ENCODE measurements at regions of chr4 and their contacts with region 1.

Region 1: DNA sequence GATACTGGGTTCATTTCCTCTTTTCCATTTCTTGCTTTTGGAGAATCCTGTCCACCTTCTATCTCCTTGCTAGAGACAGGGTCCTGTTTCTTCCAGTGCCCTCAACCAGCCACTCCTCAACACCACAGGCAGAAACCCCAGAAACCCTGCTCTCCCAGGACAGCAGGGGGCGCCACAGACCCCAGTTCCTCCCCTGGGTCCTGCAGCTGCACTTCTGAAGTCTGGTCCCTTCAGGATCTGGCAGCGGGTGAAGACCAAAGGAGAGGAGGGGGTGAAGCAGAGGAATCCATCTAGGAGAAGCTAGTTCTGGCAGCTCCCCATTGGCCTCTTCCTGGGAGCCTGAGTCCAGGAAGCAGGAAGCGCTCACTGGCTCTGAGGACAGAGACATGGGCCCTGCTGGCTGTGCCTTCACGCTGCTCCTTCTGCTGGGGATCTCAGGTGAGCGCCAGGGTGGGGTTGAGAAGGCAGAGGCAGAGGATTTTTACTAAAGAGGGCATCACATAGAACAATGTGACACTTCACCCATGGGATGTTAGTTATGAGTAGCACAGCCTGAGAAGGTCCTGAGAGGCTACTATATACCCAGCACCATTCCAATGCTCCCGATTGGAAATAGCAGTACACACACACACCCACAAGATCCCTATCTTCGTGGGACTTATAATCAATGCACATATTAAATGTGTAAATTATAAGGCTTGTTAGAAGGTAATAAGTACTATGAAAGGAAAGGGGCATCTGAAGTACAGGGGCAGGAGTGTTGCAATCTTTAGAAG is at the start of gene PRSS48:
- DNase-seq: peak; percentile 70
- H3K4me3 Mint-ChIP-seq: no peak within 1 kb of the TSS
- H3K27ac Mint-ChIP-seq: peak within 1 kb of the TSS; percentile 57
- H3K4me1 Mint-ChIP-seq: no peaks in the 10 kb centered on the region
- H3K27me3 Mint-ChIP-seq: no peaks in the 10 kb centered on the region
- CTCF ChIP-seq: peak; percentile 80
- total RNA-seq, gene PRSS48: not detected in 2 replicates

Region 2: GRCh38 chr4:150722908-150723362 is 554.0 kb before region 1 on chr4:
- CTCF ChIA-PET with region 1: no interaction called
- POLR2A ChIA-PET with region 1: no interaction called
- intact Hi-C with region 1: no loop called
- DNase-seq: peak; percentile 93
- H3K4me3 Mint-ChIP-seq: peak overlapping the region; percentile 43
- H3K27ac Mint-ChIP-seq: peak overlapping the region; percentile 94
- H3K4me1 Mint-ChIP-seq: peaks cover 31% of the 10 kb centered on the region
- H3K27me3 Mint-ChIP-seq: no peaks in the 10 kb centered on the region
- CTCF ChIP-seq: peak; percentile 24

Region 3: GRCh38 chr4:151031831-151032605 is 245.0 kb before region 1 on chr4:
- CTCF ChIA-PET with region 1: no interaction called
- POLR2A ChIA-PET with region 1: no interaction called
- intact Hi-C with region 1: no loop called
- DNase-seq: peak; percentile 28
- H3K4me3 Mint-ChIP-seq: no peak overlapping the region
- H3K27ac Mint-ChIP-seq: no peak overlapping the region
- H3K4me1 Mint-ChIP-seq: peaks cover 6% of the 10 kb centered on the region
- H3K27me3 Mint-ChIP-seq: no peaks in the 10 kb centered on the region
- CTCF ChIP-seq: no peak

Region 4: DNA sequence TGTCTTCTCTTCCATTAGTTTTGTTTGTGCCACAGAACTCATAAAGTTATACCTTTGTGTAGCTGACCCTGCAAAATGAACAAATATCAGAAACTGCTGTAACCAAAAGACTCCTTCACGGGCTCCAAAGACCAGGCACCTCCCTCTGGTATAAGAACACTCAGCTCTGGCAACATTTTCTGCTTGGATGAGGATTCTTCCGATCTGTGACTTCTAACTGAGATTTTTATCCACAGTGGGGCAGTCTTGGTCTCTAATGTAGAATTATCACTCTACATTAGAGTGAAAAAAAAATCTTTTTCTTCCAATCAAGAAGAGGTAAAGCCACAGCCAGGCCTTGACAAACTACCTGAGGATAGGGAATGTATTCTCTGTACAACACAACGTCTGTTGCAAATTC is 38.5 kb before region 1 on chr4:
- CTCF ChIA-PET with region 1: interaction called, 11 read pairs
- POLR2A ChIA-PET with region 1: no interaction called
- intact Hi-C with region 1: no loop called
- DNase-seq: no peak
- H3K4me3 Mint-ChIP-seq: no peak overlapping the region
- H3K27ac Mint-ChIP-seq: no peak overlapping the region
- H3K4me1 Mint-ChIP-seq: no peaks in the 10 kb centered on the region
- H3K27me3 Mint-ChIP-seq: no peaks in the 10 kb centered on the region
- CTCF ChIP-seq: no peak

Region 5: DNA sequence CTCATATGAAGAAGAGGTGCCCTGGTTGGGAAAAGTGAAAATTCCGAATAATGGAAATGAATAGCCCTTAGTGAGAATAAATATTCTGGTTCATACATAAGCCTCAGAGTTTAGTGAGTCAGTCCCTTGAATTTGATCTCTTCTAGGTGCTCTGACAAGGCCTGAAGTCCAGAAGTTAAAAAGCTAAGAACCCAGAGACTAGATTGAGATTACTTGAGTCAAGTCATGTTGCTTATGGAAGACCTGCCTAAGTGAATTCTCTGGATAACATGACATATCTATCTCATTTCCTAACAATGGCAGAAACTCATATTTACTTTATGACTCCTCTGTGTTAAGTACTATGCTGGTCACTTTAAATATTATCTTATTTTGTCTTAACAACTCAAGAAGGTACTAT is 10.5 kb before region 1 on chr4:
- CTCF ChIA-PET with region 1: interaction called, 16 read pairs
- POLR2A ChIA-PET with region 1: no interaction called
- intact Hi-C with region 1: no loop called
- DNase-seq: no peak
- H3K4me3 Mint-ChIP-seq: no peak overlapping the region
- H3K27ac Mint-ChIP-seq: no peak overlapping the region
- H3K4me1 Mint-ChIP-seq: peaks cover 9% of the 10 kb centered on the region
- H3K27me3 Mint-ChIP-seq: no peaks in the 10 kb centered on the region
- CTCF ChIP-seq: no peak

Measured in MCF 10A (cell line).